Left cardiac atrium (tissue), 4 donors: ENCODE measurements at regions of chr14 and their contacts with region 1.

Region 1: GRCh38 chr14:95993768-95994592 is 45.2 kb upstream of the C14orf132 start:
- DNase-seq: no peak
- ATAC-seq: no peak

Region 2: DNA sequence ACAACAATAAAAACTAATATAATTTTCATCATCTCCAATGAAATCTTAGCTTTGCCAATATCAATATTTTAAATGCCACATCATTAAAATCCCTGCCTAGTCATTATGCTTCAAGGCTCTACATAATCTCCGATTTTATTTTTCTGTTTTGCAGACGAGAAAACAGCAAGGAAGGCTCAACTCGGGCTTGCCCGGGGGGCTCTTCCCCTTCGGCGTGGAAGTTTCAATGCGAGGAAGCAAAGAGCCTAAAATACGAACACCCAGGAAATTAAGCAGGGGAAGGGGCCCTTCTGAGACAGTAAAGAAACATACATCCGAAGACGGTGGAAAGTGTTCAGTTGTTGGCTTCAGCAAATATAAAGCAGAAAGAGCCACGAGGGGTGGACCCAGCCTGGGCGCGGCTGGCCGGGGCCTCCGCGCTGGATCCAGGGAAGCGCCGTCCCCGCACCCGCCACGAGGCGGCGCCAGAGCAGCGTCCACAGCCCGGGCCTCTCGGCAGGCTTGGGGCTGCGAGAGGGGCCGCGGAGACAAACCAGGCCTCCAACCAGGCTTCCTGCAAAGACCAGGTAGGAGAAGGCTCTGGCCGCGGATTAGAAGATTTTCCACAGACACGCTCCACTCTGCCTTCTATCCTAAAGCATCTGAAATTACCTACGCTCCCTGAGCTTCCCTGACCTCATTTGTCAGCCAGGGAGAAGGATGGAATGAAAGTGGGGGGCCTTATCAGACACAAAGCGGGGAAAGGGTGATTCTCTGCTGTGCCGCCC is 1304.6 kb before region 1 on chr14:
- intact Hi-C with region 1: loop called in 1 of 2 experiments (anchors 5 kb)
- DNase-seq: peak; percentile 56
- ATAC-seq: peak; percentile 94 to 95

Region 3: GRCh38 chr14:96275177-96276112 is 281.5 kb after region 1 on chr14:
- intact Hi-C with region 1: loop called (anchors 5 to 10 kb)
- DNase-seq: peak; percentile 74
- ATAC-seq: peak; percentile 43 to 64